Prostate gland (tissue), 2 donors: ENCODE measurements at regions of chr3 and their contacts with region 1.

Region 1: DNA sequence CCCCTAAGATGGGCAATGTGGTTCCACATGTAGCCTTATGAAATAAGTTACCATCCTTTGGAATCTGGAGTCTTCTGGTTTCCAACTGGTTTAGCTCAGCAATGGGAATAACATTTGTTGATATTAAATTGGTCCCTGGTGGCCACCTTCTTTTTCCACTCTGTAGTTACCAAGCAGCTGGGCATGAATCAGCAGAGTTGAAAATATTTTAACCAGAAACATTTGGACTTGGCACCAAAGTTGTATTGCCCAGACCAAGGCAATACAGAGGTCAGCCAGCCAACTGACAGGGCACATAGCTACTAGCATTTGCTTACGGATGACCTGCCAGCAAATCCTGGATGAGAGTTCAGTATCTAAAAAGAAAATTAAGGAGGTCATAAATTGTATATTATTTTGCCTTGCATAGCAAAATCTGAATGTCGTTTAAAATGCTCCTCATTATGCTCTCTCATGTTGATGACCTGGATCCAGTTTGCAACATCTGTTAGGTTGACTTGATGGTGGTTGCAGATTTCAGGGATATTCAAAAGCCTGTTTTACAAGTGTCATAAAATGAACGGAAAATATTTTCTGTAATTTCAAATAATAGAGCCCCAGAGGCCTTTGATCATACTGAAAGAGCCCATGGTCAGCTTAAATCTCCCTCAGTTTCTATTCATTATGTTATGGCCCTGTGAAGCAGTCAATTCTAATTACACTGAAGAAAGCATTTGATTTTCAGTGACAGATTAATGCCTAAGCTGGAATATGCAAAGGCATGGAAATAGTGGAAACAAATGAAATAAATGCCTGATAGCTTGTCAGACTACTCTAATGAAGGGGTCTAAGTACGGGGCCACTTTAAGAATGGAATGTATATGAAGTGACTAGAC is 54.6 kb downstream of the PPM1L start:
- DNase-seq: no peak
- H3K4me3 ChIP-seq: no peak overlapping the region
- H3K27ac ChIP-seq: no peak overlapping the region
- H3K4me1 ChIP-seq: no peaks in the 10 kb centered on the region
- H3K27me3 ChIP-seq: no peaks in the 10 kb centered on the region
- CTCF ChIP-seq: no peak
- POLR2A ChIP-seq: no peak

Region 2: DNA sequence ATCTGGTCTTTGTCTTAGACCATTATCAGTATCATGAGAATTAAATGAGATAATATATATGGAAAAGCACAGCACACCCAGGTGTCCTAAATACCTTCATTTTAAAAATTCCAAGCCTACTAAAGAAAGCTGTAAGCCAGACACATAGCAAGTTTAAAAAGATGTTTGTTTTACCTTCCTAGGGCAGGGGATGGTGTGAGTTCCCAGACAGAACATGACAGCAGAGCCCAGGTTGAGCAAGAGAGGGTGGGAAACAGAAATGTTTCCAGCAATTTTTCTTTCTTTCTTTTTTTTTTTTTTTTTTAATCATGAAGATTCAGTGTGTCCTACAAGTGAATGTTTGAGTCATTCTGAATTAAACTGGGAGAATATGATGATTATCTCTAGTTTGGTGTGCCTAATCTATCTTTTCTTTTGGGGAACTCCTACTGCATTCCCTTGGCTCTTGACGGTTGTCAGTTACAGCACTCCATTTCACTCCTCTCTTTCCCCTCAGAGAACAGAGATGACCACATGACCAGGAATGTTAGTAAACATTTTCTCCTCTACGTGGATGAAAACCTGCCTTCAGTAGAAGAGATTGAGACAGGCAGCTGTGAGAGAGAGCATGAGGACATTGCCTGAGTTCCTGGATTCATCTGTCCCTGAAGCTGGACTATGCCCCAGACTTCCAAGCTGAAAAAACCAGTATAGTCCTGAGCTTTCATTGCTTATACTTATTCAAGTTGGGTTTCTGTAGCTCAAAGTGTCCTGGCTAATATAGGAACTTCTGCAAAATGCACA is 188.1 kb before region 1 on chr3:
- intact Hi-C with region 1: no loop called
- DNase-seq: no peak
- H3K4me3 ChIP-seq: no peak overlapping the region
- H3K27ac ChIP-seq: no peak overlapping the region
- H3K4me1 ChIP-seq: no peaks in the 10 kb centered on the region
- H3K27me3 ChIP-seq: no peaks in the 10 kb centered on the region
- CTCF ChIP-seq: no peak
- POLR2A ChIP-seq: no peak

Region 3: GRCh38 chr3:160739079-160739478 is 71.5 kb before region 1 on chr3:
- intact Hi-C with region 1: no loop called
- DNase-seq: peak; percentile 9
- H3K4me3 ChIP-seq: no peak overlapping the region
- H3K27ac ChIP-seq: no peak overlapping the region
- H3K4me1 ChIP-seq: no peaks in the 10 kb centered on the region
- H3K27me3 ChIP-seq: no peaks in the 10 kb centered on the region
- CTCF ChIP-seq: no peak
- POLR2A ChIP-seq: no peak

Region 4: GRCh38 chr3:160869818-160870217 is 59.2 kb after region 1 on chr3:
- intact Hi-C with region 1: loop called (anchors 5 kb)
- DNase-seq: peak; percentile 56
- H3K4me3 ChIP-seq: no peak overlapping the region
- H3K27ac ChIP-seq: no peak overlapping the region
- H3K4me1 ChIP-seq: no peaks in the 10 kb centered on the region
- H3K27me3 ChIP-seq: no peaks in the 10 kb centered on the region
- CTCF ChIP-seq: no peak
- POLR2A ChIP-seq: no peak